ENCODE measurements at regions of chr14 and their contacts with region 1.

Region 1: GRCh38 chr14:55062517-55063351 is 11.3 kb downstream of the MAPK1IP1L start:
- DNase-seq: no peak
- ATAC-seq: no peak; the same call in 2 of the 3 replicates
- H3K4me3 ChIP-seq: no peak overlapping the region
- H3K27ac ChIP-seq: no peak overlapping the region
- H3K4me1 ChIP-seq: no peaks in the 10 kb centered on the region
- H3K27me3 ChIP-seq: no peaks in the 10 kb centered on the region
- CTCF ChIP-seq: no peak
- EP300 ChIP-seq: no peak
- POLR2A ChIP-seq: no peak
- RAD21 ChIP-seq: no peak

Region 2: DNA sequence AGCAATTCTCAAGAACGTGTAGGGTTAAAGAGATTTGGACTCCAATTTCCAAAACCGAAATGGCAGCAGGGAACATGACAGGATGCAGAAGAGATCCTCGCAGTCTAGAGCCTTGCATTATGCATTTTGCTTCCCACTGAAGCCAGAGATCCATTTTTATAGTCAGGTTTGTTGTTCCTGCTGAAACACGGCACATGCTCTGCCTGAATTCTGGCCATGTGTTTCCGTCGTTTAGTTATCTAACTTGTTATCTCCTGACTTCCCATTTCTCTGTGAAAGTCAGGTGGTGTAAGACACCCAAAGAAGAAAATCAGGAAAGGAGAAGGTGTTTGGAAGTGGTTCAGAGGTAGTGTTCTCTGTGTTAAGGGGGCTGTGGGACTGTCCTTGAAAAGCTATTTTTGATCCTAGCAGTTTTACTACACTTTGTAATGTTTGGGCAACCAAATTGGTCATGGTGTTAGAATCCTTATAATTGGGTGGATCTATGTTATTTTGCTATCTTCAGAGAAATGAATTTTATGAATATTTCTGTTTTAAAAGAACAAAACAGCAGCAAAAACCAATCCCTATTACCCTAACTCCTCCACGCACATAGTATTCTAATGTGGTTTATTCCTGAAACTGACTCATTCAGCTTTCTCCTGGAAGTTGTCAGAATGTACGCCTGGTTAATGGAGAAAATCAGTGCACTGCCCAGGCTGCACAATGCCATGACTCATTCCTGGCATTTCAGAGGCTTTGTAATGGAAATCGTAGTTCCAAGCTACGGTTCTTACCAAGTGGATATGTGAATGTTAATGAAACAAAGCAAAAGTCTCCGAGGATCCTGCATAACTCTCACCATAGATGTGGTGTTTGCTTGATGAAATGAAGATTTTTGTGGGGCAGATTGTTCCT is 385.7 kb before region 1 on chr14:
- CTCF ChIA-PET with region 1: no interaction called
- POLR2A ChIA-PET with region 1: no interaction called
- RAD21 ChIA-PET with region 1: no interaction called
- SMC1A ChIA-PET with region 1: no interaction called
- in situ Hi-C with region 1: no loop called
- intact Hi-C with region 1: no loop called
- DNase-seq: no peak
- ATAC-seq: no peak
- H3K4me3 ChIP-seq: no peak overlapping the region
- H3K27ac ChIP-seq: no peak overlapping the region
- H3K4me1 ChIP-seq: peaks cover 14% of the 10 kb centered on the region
- H3K27me3 ChIP-seq: no peaks in the 10 kb centered on the region
- CTCF ChIP-seq: no peak
- EP300 ChIP-seq: no peak
- POLR2A ChIP-seq: no peak
- RAD21 ChIP-seq: no peak

Region 3: DNA sequence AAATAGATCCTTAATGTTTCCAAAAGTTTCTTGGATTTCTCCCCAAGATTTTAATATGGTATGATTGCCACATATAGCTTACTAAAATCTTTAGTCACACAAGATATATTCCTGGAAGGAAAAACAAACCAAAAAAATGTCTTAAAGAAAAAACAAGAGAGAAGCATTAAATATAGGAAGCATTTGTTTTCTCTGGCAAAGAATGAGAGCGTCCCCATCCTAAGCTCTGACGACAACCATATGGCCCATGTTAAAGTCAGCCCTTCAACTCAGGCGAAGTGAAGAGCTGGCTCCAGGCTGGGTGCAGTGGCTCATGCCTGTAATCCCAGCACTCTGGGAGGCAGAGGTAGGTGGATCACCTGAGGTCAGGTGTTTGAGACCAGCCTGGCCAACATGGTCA is 195.7 kb before region 1 on chr14:
- CTCF ChIA-PET with region 1: no interaction called
- POLR2A ChIA-PET with region 1: no interaction called
- RAD21 ChIA-PET with region 1: no interaction called
- SMC1A ChIA-PET with region 1: no interaction called
- in situ Hi-C with region 1: no loop called
- intact Hi-C with region 1: no loop called
- DNase-seq: no peak
- ATAC-seq: no peak
- H3K4me3 ChIP-seq: no peak overlapping the region
- H3K27ac ChIP-seq: no peak overlapping the region
- H3K4me1 ChIP-seq: no peaks in the 10 kb centered on the region
- H3K27me3 ChIP-seq: no peaks in the 10 kb centered on the region
- CTCF ChIP-seq: no peak
- EP300 ChIP-seq: no peak
- POLR2A ChIP-seq: no peak
- RAD21 ChIP-seq: no peak

Region 4: GRCh38 chr14:55038708-55039107 is 24.0 kb before region 1 on chr14:
- CTCF ChIA-PET with region 1: no interaction called
- POLR2A ChIA-PET with region 1: interaction called, 10 read pairs
- RAD21 ChIA-PET with region 1: no interaction called
- SMC1A ChIA-PET with region 1: no interaction called
- in situ Hi-C with region 1: no loop called
- intact Hi-C with region 1: no loop called
- DNase-seq: no peak
- ATAC-seq: peak; percentile 19; the same call in 1 of the 3 replicates
- H3K4me3 ChIP-seq: no peak overlapping the region
- H3K27ac ChIP-seq: no peak overlapping the region
- H3K4me1 ChIP-seq: no peaks in the 10 kb centered on the region
- H3K27me3 ChIP-seq: no peaks in the 10 kb centered on the region
- CTCF ChIP-seq: no peak
- EP300 ChIP-seq: no peak
- POLR2A ChIP-seq: no peak
- RAD21 ChIP-seq: no peak

Region 5: GRCh38 chr14:55077155-55077554 is 14.4 kb after region 1 on chr14:
- CTCF ChIA-PET with region 1: interaction called, 3 read pairs
- POLR2A ChIA-PET with region 1: interaction called, 12 read pairs
- RAD21 ChIA-PET with region 1: interaction called, 4 read pairs
- SMC1A ChIA-PET with region 1: interaction called, 32 read pairs
- in situ Hi-C with region 1: no loop called
- intact Hi-C with region 1: no loop called
- DNase-seq: no peak
- ATAC-seq: peak; percentile 48
- H3K4me3 ChIP-seq: no peak overlapping the region
- H3K27ac ChIP-seq: no peak overlapping the region; the same call in 1 of the 2 replicates
- H3K4me1 ChIP-seq: peaks cover 40% of the 10 kb centered on the region
- H3K27me3 ChIP-seq: no peaks in the 10 kb centered on the region
- CTCF ChIP-seq: no peak
- EP300 ChIP-seq: no peak
- POLR2A ChIP-seq: no peak
- RAD21 ChIP-seq: no peak

Measured in GM12878 (cell line).